CD4-positive, alpha-beta T cell (primary cell): ENCODE measurements at regions of chrX and their contacts with region 1.

Region 1: DNA sequence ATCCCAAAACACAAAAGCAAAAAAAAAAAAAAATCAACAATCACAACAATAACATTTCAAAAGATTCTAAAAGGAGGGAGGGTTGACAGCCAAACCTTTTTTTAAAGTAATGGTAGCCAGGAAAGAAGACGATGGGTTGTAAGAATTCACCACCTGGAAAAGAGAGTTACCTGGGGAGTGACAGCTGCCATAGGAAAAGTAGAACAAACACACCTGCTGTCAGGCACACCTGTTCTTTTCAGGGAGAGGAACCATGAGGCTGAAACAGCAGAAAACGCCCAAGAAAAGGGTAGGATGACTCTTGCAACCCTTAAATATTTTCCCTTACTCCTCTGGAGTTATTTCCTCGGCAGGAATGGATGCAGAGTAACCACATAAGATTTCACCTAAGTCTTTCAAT is 388.4 kb upstream of the TEX13C start:
- DNase-seq: no peak
- ATAC-seq: no peak
- H3K4me3 ChIP-seq: no peak overlapping the region
- H3K4me3 Mint-ChIP-seq: no peak overlapping the region
- H3K27ac ChIP-seq: no peak overlapping the region
- H3K27ac Mint-ChIP-seq: no peak overlapping the region
- H3K4me1 ChIP-seq: no peaks in the 10 kb centered on the region
- H3K4me1 Mint-ChIP-seq: no peaks in the 10 kb centered on the region
- H3K27me3 ChIP-seq: no peaks in the 10 kb centered on the region
- H3K27me3 Mint-ChIP-seq: no peaks in the 10 kb centered on the region
- CTCF ChIP-seq: no peak

Region 2: DNA sequence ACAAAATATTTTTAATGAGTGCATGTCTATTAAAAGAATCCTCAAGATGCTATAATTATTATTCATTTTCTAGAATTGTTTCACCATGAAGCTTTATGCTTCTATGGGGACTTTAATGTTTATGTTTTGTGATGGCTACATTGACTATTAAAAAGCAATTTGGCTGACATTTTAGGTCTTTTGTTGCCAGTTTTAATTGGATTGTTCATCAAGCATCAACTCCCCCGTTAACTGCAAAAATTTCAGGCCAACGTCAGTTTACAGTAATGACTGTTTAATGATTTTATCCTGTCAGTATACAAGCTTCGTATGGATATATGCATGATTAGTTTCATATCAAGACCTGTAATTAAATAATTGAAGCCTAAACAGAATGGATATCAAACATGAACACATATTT is 162.1 kb before region 1 on chrX:
- CTCF ChIA-PET with region 1: no interaction called
- POLR2A ChIA-PET with region 1: no interaction called
- intact Hi-C with region 1: no loop called
- DNase-seq: no peak
- ATAC-seq: no peak
- H3K4me3 ChIP-seq: no peak overlapping the region
- H3K4me3 Mint-ChIP-seq: no peak overlapping the region
- H3K27ac ChIP-seq: no peak overlapping the region
- H3K27ac Mint-ChIP-seq: no peak overlapping the region
- H3K4me1 ChIP-seq: no peaks in the 10 kb centered on the region
- H3K4me1 Mint-ChIP-seq: no peaks in the 10 kb centered on the region
- H3K27me3 ChIP-seq: no peaks in the 10 kb centered on the region
- H3K27me3 Mint-ChIP-seq: no peaks in the 10 kb centered on the region
- CTCF ChIP-seq: no peak

Region 3: DNA sequence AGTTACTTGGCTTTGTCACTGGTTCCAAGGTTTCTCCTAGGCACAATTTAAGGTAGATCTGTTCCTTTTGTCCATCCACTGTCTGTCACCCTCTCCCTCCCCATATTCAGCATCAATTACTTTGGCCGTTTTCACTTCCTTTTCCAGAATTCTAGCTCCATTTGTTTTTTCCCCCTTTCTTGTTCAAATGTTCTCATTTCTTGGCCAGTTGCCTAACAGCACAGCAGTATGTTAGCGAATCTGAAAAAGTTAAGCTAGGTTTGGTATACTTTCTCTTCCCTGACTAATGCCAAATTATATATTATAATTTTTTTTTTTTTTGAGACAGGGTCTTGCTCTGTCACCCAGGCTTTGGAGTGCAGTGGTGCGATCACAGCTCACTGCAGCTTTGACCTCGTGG is 20.6 kb before region 1 on chrX:
- CTCF ChIA-PET with region 1: no interaction called
- POLR2A ChIA-PET with region 1: no interaction called
- intact Hi-C with region 1: loop called in 1 of 2 experiments (anchors 2 kb)
- DNase-seq: no peak
- ATAC-seq: no peak
- H3K4me3 ChIP-seq: no peak overlapping the region
- H3K4me3 Mint-ChIP-seq: no peak overlapping the region
- H3K27ac ChIP-seq: no peak overlapping the region
- H3K27ac Mint-ChIP-seq: no peak overlapping the region
- H3K4me1 ChIP-seq: no peaks in the 10 kb centered on the region
- H3K4me1 Mint-ChIP-seq: no peaks in the 10 kb centered on the region
- H3K27me3 ChIP-seq: no peaks in the 10 kb centered on the region
- H3K27me3 Mint-ChIP-seq: no peaks in the 10 kb centered on the region
- CTCF ChIP-seq: no peak